ENCODE measurements at regions of chr13 and their contacts with region 1.

Region 1: GRCh38 chr13:37074703-37075102 is 15.2 kb upstream of the SUPT20H start:
- DNase-seq: no peak
- ATAC-seq: no peak
- H3K4me3 ChIP-seq: no peak overlapping the region
- H3K27ac ChIP-seq: no peak overlapping the region
- H3K4me1 ChIP-seq: no peaks in the 10 kb centered on the region
- H3K27me3 ChIP-seq: no peaks in the 10 kb centered on the region
- CTCF ChIP-seq: peak in 4 of 5 experiments; percentile 7 to 40 (median 20)
- POLR2A ChIP-seq: no peak

Region 2: DNA sequence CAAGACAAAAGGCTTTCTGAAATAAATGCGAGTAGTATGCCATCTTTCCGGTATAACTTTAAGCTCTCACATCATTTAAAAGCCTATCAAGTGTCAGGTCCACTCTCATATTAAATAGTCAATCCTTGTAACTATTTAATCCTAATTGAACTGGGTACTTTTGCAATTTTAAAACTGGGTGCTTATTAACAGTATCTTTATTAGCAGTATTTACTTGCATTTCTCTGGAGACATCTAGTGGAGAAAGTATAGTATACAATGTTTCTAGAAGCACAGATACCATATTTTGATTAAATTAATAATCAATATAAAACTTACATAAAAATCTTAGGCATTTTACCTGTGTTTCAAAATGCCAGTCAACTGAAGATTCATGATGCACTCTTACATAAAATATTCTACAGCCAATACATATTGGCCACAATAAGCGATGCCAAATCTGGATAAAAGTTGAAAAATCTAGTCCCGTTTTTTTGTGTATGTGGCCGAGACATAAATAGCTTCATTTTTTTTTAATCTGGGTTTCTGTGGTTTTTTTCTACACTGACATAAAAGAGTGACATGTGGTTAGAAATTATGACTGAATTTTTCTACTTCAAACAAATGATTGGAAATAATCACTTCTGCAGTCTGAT is 528.2 kb after region 1 on chr13:
- in situ Hi-C with region 1: no loop called
- intact Hi-C with region 1: loop called (anchors 10 kb)
- DNase-seq: no peak
- ATAC-seq: no peak
- H3K4me3 ChIP-seq: no peak overlapping the region
- H3K27ac ChIP-seq: no peak overlapping the region
- H3K4me1 ChIP-seq: no peaks in the 10 kb centered on the region
- H3K27me3 ChIP-seq: no peaks in the 10 kb centered on the region
- CTCF ChIP-seq: peak in 3 of 5 experiments; percentile 16 to 46 (median 42)
- POLR2A ChIP-seq: no peak